Activated CD4-positive, alpha-beta T cell treated with anti-CD3 and anti-CD28 coated beads for 36 hours (primary cell): ENCODE measurements at regions of chr2 and their contacts with region 1.

Region 1: GRCh38 chr2:41869542-41870264 is 178.1 kb upstream of the PKDCC start:
- DNase-seq: peak; percentile 86
- ATAC-seq: peak; percentile 85
- H3K4me3 Mint-ChIP-seq: no peak overlapping the region
- H3K27ac Mint-ChIP-seq: no peak overlapping the region
- H3K4me1 Mint-ChIP-seq: peaks cover 6% of the 10 kb centered on the region
- H3K27me3 Mint-ChIP-seq: peaks cover 9% of the 10 kb centered on the region

Region 2: DNA sequence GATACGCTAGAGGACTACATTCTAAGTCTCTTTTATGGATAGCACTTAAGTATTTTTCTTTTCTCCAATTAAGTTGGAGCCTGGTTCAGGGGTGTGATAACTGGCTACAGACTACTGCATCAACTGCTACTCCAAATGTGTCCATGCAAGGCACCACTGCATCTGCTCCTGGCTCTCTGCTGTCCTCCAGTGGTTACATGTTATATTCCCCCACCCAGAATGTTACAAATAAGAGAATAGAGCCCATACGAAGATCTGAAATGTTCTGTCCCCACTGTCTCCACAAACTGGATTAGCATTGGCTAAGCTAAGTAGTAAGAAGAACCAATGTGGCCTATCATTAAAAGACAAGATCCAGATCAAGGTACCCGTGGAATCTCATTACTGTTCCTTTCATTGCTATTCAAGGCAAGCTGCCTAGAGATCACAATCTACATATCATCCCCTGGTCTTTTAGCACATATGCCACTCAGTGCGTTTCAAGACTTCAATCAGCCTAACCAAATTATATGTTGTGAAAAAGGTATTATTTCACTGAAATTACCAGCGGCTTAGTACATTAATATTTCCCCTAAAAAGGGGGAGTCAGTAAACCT is 1109.5 kb before region 1 on chr2:
- CTCF ChIA-PET with region 1: no interaction called
- POLR2A ChIA-PET with region 1: no interaction called
- intact Hi-C with region 1: no loop called
- DNase-seq: peak; percentile 35
- ATAC-seq: peak; percentile 68
- H3K4me3 Mint-ChIP-seq: no peak overlapping the region
- H3K27ac Mint-ChIP-seq: no peak overlapping the region
- H3K4me1 Mint-ChIP-seq: peaks cover 4% of the 10 kb centered on the region
- H3K27me3 Mint-ChIP-seq: no peaks in the 10 kb centered on the region

Region 3: DNA sequence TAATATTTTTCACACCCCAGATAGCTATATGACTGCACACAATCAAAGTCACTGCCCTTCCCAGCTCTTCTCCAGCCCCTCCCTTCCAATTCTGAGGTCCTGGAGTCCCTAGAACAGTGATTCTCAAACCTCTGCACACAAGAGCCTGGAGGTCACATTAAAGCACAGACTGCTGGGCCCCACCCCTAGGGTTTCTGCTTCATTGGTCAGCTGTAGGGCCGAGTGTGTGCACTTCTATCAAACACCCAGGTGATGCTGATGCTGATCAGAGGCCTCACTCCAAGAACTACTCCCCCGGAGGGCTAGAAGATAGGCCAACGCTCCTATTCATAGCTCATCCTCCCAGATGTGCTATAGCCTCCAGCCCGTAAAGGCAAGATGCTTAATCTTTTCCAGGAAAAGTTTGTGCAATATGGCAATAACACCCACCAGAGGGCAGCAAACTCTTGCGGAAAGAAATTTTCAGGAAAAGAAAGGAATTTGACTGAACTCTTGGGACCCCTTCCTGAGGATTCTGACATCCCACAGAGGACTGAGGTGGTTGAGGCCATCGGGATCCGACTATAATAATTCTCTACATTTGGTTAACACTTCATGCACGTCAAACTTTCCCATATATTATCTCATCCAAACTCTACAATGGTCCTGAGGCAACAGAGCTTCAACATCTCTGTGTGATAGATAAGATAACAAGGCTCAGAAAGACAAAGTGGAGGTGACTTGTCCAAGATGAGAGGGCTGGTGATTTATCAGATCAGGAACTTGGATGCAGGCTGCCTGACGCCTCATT is 16.1 kb before region 1 on chr2:
- CTCF ChIA-PET with region 1: interaction called, 28 read pairs
- POLR2A ChIA-PET with region 1: no interaction called
- intact Hi-C with region 1: no loop called
- DNase-seq: peak; percentile 28
- ATAC-seq: peak; percentile 50
- H3K4me3 Mint-ChIP-seq: no peak overlapping the region
- H3K27ac Mint-ChIP-seq: peak overlapping the region; percentile 47
- H3K4me1 Mint-ChIP-seq: peaks cover 17% of the 10 kb centered on the region
- H3K27me3 Mint-ChIP-seq: peaks cover 10% of the 10 kb centered on the region

Region 4: GRCh38 chr2:42238644-42239288 is 369.1 kb after region 1 on chr2:
- CTCF ChIA-PET with region 1: interaction called, 7 read pairs
- POLR2A ChIA-PET with region 1: no interaction called
- intact Hi-C with region 1: loop called in 1 of 2 experiments (anchors 5 kb)
- DNase-seq: peak; percentile 66
- ATAC-seq: peak; percentile 91
- H3K4me3 Mint-ChIP-seq: no peak overlapping the region
- H3K27ac Mint-ChIP-seq: no peak overlapping the region
- H3K4me1 Mint-ChIP-seq: peaks cover 79% of the 10 kb centered on the region
- H3K27me3 Mint-ChIP-seq: no peaks in the 10 kb centered on the region